ENCODE measurements at regions of chr7 and their contacts with region 1.

Region 1: GRCh38 chr7:30026229-30027064 is at the start of gene FKBP14:
- DNase-seq: peak; percentile 71 to 97 (median 91)
- ATAC-seq: peak; percentile 83
- H3K4me3 ChIP-seq: peak within 1 kb of the TSS; percentile 66 to 86
- H3K4me3 Mint-ChIP-seq: peak within 1 kb of the TSS; percentile 96
- H3K27ac ChIP-seq: peak within 1 kb of the TSS; percentile 65 to 70
- H3K27ac Mint-ChIP-seq: peak within 1 kb of the TSS; percentile 84
- H3K4me1 ChIP-seq: peaks cover 12% of the 10 kb centered on the region
- H3K4me1 Mint-ChIP-seq: peaks cover 46% of the 10 kb centered on the region
- H3K27me3 ChIP-seq: no peaks in the 10 kb centered on the region
- H3K27me3 Mint-ChIP-seq: no peaks in the 10 kb centered on the region
- CTCF ChIP-seq: no peak
- total RNA-seq, gene FKBP14: 5.7 to 6.1 TPM

Region 2: DNA sequence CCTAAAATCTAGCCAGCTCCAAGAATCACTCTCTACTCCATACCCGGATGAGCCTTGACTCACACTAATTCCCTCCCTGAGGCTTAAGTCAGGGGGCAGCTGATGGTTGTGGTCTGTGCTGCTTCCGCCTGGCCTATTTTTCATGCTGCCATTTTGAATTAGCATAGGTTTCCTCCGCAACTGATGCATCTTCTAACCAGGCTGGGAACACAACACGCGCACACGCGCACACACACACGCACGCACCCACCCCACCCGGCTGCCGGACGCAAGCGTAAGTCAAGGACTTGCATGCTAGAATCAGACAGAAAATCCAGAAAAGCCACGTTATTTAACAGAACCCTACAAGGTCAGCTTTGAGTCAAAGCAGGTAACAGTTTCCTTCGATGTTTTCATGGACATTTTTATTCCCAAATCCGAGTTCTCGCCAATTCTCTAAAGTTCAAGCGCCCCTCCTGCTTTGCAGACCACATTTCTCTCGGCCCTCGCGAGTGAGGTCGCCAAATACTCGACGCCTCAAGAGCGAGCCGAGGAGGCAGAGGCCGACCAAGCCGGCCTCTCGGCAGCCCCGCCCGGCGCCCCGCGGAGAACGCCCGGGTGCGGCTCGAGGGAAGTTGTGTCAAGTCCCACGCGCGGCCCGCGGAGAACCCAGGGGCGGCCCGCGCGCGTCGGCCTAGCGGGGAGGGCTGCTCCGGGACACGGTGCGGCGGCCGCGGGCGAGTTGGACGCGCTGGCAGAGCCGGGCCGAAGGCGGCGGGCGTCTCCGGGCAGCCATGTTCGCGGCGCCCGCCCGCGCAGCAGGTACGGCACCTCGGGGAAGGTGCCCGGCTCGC is 37.8 kb before region 1 on chr7:
- CTCF ChIA-PET with region 1: interaction called, 3 read pairs
- POLR2A ChIA-PET with region 1: no interaction called
- intact Hi-C with region 1: loop called (anchors 1 to 5 kb)
- DNase-seq: peak in 8 of 9 experiments; percentile 16 to 63 (median 36)
- ATAC-seq: peak; percentile 54
- H3K4me3 ChIP-seq: peak overlapping the region; percentile 60 to 70
- H3K4me3 Mint-ChIP-seq: peak overlapping the region; percentile 83
- H3K27ac ChIP-seq: peak overlapping the region in 1 of 2 experiments; percentile 37
- H3K27ac Mint-ChIP-seq: peak overlapping the region; percentile 73
- H3K4me1 ChIP-seq: peaks cover 13% of the 10 kb centered on the region
- H3K4me1 Mint-ChIP-seq: peaks cover 24% of the 10 kb centered on the region
- H3K27me3 ChIP-seq: peaks cover 0 to 3% of the 10 kb centered on the region in 2 experiments
- H3K27me3 Mint-ChIP-seq: peaks cover 26% of the 10 kb centered on the region
- CTCF ChIP-seq: no peak

Region 3: GRCh38 chr7:30116771-30117170 is 90.3 kb after region 1 on chr7:
- CTCF ChIA-PET with region 1: no interaction called
- POLR2A ChIA-PET with region 1: no interaction called
- intact Hi-C with region 1: no loop called
- DNase-seq: no peak
- ATAC-seq: no peak
- H3K4me3 ChIP-seq: no peak overlapping the region
- H3K4me3 Mint-ChIP-seq: no peak overlapping the region
- H3K27ac ChIP-seq: no peak overlapping the region
- H3K27ac Mint-ChIP-seq: no peak overlapping the region
- H3K4me1 ChIP-seq: peaks cover 5% of the 10 kb centered on the region
- H3K4me1 Mint-ChIP-seq: peaks cover 6% of the 10 kb centered on the region
- H3K27me3 ChIP-seq: no peaks in the 10 kb centered on the region
- H3K27me3 Mint-ChIP-seq: no peaks in the 10 kb centered on the region
- CTCF ChIP-seq: no peak

Region 4: GRCh38 chr7:30134611-30135545 is 108.4 kb after region 1 on chr7 and contains the start of gene MTURN:
- CTCF ChIA-PET with region 1: interaction called, 3 read pairs
- POLR2A ChIA-PET with region 1: no interaction called
- intact Hi-C with region 1: loop called (anchors 2 kb)
- DNase-seq: peak; percentile 68 to 95 (median 86)
- ATAC-seq: peak; percentile 80
- H3K4me3 ChIP-seq: peak within 1 kb of the TSS; percentile 74 to 78
- H3K4me3 Mint-ChIP-seq: peak within 1 kb of the TSS; percentile 91
- H3K27ac ChIP-seq: peak within 1 kb of the TSS; percentile 4 to 49
- H3K27ac Mint-ChIP-seq: peak within 1 kb of the TSS; percentile 90
- H3K4me1 ChIP-seq: peaks cover 15% of the 10 kb centered on the region
- H3K4me1 Mint-ChIP-seq: peaks cover 11% of the 10 kb centered on the region
- H3K27me3 ChIP-seq: no peaks in the 10 kb centered on the region
- H3K27me3 Mint-ChIP-seq: no peaks in the 10 kb centered on the region
- CTCF ChIP-seq: no peak
- total RNA-seq, gene MTURN: 16.1 to 19.7 TPM

Region 5: DNA sequence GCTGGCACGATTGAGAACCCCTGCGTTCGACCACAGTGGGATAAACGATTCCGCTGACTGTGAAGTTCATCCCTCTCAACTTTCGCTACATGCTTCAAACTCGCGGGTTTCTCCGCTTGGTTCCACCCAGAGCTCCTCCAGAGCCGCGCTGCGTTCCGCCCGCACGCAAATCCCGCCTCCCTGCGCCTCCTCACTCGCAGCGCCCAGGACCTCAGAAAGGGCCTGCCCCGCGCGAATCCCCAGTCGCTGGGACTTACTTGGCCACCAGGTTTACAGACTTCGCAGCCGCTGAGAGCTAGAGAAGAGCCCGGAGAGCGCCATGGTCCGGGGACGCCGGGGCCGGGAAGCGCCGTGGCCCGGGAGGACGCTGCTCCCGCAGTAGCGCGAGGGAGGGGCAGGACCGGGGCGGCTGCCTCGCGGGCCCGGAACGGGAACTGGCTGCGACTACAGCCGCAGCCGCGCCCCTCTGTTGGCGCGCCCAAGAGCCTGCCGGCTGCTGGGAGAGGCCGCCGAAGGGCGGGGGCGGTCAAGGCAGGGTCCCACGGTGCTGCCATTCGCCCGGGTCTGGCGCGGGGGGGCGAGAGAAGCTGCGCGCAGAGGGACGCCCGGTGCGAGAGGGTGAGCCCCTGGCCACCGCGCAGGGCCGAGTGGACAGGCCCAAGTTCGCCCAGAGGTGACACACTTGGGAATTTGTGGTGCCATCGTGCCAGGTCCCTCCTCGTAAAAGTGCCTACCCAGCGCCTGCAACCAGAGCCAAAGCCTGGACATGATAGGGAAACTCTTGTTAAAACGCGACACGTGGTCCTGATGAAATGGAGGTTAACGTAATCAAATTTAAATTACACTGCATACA is 452.1 kb after region 1 on chr7 and contains the start of gene NOD1:
- CTCF ChIA-PET with region 1: no interaction called
- POLR2A ChIA-PET with region 1: interaction called, 3 read pairs
- intact Hi-C with region 1: loop called (anchors 1 to 10 kb)
- DNase-seq: peak; percentile 13 to 81 (median 63)
- ATAC-seq: peak; percentile 81
- H3K4me3 ChIP-seq: peak within 1 kb of the TSS; percentile 68 to 80
- H3K4me3 Mint-ChIP-seq: peak within 1 kb of the TSS; percentile 95
- H3K27ac ChIP-seq: peak within 1 kb of the TSS; percentile 62 to 70
- H3K27ac Mint-ChIP-seq: peak within 1 kb of the TSS; percentile 89
- H3K4me1 ChIP-seq: peaks cover 11% of the 10 kb centered on the region
- H3K4me1 Mint-ChIP-seq: peaks cover 57% of the 10 kb centered on the region
- H3K27me3 ChIP-seq: no peaks in the 10 kb centered on the region
- H3K27me3 Mint-ChIP-seq: no peaks in the 10 kb centered on the region
- CTCF ChIP-seq: no peak
- total RNA-seq, gene NOD1: 8.4 to 11.1 TPM

Region 6: GRCh38 chr7:30594549-30595435 is 568.3 kb after region 1 on chr7 and contains the start of gene GARS1:
- CTCF ChIA-PET with region 1: no interaction called
- POLR2A ChIA-PET with region 1: interaction called, 4 read pairs
- intact Hi-C with region 1: loop called (anchors 1 kb)
- DNase-seq: peak; percentile 81 to 95 (median 89)
- ATAC-seq: peak; percentile 83
- H3K4me3 ChIP-seq: peak within 1 kb of the TSS; percentile 72 to 87
- H3K4me3 Mint-ChIP-seq: peak within 1 kb of the TSS; percentile 99
- H3K27ac ChIP-seq: peak within 1 kb of the TSS; percentile 90 to 93
- H3K27ac Mint-ChIP-seq: peak within 1 kb of the TSS; percentile 99
- H3K4me1 ChIP-seq: peaks cover 36% of the 10 kb centered on the region
- H3K4me1 Mint-ChIP-seq: peaks cover 73% of the 10 kb centered on the region
- H3K27me3 ChIP-seq: no peaks in the 10 kb centered on the region
- H3K27me3 Mint-ChIP-seq: no peaks in the 10 kb centered on the region
- CTCF ChIP-seq: no peak
- total RNA-seq, gene GARS1: 119 to 121 TPM

Region 7: GRCh38 chr7:30771174-30771879 is 744.9 kb after region 1 on chr7 and contains the start of gene MINDY4:
- CTCF ChIA-PET with region 1: no interaction called
- POLR2A ChIA-PET with region 1: no interaction called
- intact Hi-C with region 1: loop called in 1 of 2 experiments (anchors 2 kb)
- DNase-seq: peak; percentile 40 to 79 (median 59)
- ATAC-seq: peak; percentile 89
- H3K4me3 ChIP-seq: peak within 1 kb of the TSS; percentile 78 to 85
- H3K4me3 Mint-ChIP-seq: peak within 1 kb of the TSS; percentile 89
- H3K27ac ChIP-seq: peak within 1 kb of the TSS; percentile 56 to 59
- H3K27ac Mint-ChIP-seq: peak within 1 kb of the TSS; percentile 84
- H3K4me1 ChIP-seq: peaks cover 4% of the 10 kb centered on the region
- H3K4me1 Mint-ChIP-seq: peaks cover 6% of the 10 kb centered on the region
- H3K27me3 ChIP-seq: no peaks in the 10 kb centered on the region
- H3K27me3 Mint-ChIP-seq: no peaks in the 10 kb centered on the region
- CTCF ChIP-seq: no peak
- total RNA-seq, gene MINDY4: 0.33 to 0.46 TPM